GM10248 (cell line): ENCODE measurements at regions of chr2 and their contacts with region 1.

Region 1: DNA sequence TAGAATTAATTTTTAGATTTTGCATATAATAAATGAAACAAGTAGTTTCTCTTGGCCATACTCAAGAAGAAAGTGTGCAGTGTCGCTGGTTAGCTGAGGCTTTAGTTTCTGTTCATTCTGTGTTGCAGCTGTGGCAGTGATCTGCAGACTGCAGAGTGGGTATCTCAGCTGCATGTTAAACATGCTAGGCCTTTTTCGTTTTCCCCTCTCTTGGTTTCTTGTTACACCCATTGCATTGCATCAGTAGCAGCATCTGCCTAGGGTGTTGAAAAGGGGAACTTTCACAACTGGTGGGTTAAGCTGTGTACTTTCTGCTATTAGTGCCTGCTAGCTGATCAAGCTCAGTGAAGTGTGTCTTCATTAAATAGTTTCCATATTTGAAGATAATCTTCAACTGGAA is 51.3 kb downstream of the ACSL3 start:
- DNase-seq: peak; percentile 81
- CTCF ChIP-seq: no peak

Region 2: GRCh38 chr2:222939208-222939856 is 27.2 kb after region 1 on chr2:
- CTCF ChIA-PET with region 1: interaction called, 13 read pairs
- POLR2A ChIA-PET with region 1: no interaction called
- DNase-seq: peak; percentile 24
- CTCF ChIP-seq: peak; percentile 67